ENCODE measurements at regions of chr7 and their contacts with region 1.

Region 1: GRCh38 chr7:98400542-98401340 is at the start of gene BAIAP2L1:
- DNase-seq: peak; percentile 82
- ATAC-seq: peak; percentile 91 to 98 (median 96)
- H3K4me3 ChIP-seq: peak within 1 kb of the TSS; percentile 33 to 85 (median 63)
- H3K27ac ChIP-seq: peak within 1 kb of the TSS; percentile 66 to 88 (median 74)
- H3K4me1 ChIP-seq: peaks cover 0 to 13% (median 7%) of the 10 kb centered on the region in 9 donors
- H3K27me3 ChIP-seq: peaks cover 0 to 46% (median 23%) of the 10 kb centered on the region in 7 donors
- CTCF ChIP-seq: peak in 4 of 9 donors; percentile 64 to 78 (median 72)
- total RNA-seq, gene BAIAP2L1: 0.53 to 5.2 (median 1.4) TPM

Region 2: DNA sequence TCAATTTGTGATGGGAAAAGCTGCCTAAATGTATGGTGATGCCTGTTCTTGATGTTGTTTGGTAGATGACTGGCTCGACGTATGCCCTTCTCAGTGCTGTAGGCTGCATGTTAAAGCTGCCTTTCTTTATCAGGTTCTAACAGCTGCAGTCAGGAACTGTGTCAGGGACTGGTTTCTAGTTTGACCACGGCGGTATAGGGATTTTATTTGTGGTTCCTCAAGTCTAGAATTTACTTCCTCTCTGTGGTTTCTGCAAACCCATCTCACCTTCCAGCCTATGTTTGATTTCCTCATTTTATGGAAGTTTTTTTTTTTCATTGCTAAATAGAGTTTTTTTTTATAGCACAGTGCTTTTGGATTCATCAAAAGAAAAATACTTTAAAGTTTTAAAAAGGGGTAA is 267.6 kb before region 1 on chr7:
- intact Hi-C with region 1: no loop called
- DNase-seq: no peak
- ATAC-seq: peak in 3 of 8 donors; percentile 19 to 44 (median 22)
- H3K4me3 ChIP-seq: no peak overlapping the region
- H3K27ac ChIP-seq: peak overlapping the region in 1 of 10 donors; percentile 77
- H3K4me1 ChIP-seq: peaks cover 4 to 72% (median 35%) of the 10 kb centered on the region in 9 donors
- H3K27me3 ChIP-seq: peaks cover 0 to 35% (median 0%) of the 10 kb centered on the region in 7 donors
- CTCF ChIP-seq: no peak

Region 3: GRCh38 chr7:98251841-98252639 is 148.7 kb before region 1 on chr7 and contains the start of gene TECPR1:
- intact Hi-C with region 1: loop called in 2 of 10 experiments (anchors 2 to 5 kb)
- DNase-seq: peak; percentile 95 to 96
- ATAC-seq: peak; percentile 98 to 100 (median 99)
- H3K4me3 ChIP-seq: peak within 1 kb of the TSS; percentile 75 to 97 (median 90)
- H3K27ac ChIP-seq: peak within 1 kb of the TSS; percentile 72 to 93 (median 88)
- H3K4me1 ChIP-seq: peaks cover 4 to 66% (median 52%) of the 10 kb centered on the region in 9 donors
- H3K27me3 ChIP-seq: no peaks in the 10 kb centered on the region
- CTCF ChIP-seq: no peak
- total RNA-seq, gene TECPR1: 12.8 to 23.8 (median 15.4) TPM

Region 4: DNA sequence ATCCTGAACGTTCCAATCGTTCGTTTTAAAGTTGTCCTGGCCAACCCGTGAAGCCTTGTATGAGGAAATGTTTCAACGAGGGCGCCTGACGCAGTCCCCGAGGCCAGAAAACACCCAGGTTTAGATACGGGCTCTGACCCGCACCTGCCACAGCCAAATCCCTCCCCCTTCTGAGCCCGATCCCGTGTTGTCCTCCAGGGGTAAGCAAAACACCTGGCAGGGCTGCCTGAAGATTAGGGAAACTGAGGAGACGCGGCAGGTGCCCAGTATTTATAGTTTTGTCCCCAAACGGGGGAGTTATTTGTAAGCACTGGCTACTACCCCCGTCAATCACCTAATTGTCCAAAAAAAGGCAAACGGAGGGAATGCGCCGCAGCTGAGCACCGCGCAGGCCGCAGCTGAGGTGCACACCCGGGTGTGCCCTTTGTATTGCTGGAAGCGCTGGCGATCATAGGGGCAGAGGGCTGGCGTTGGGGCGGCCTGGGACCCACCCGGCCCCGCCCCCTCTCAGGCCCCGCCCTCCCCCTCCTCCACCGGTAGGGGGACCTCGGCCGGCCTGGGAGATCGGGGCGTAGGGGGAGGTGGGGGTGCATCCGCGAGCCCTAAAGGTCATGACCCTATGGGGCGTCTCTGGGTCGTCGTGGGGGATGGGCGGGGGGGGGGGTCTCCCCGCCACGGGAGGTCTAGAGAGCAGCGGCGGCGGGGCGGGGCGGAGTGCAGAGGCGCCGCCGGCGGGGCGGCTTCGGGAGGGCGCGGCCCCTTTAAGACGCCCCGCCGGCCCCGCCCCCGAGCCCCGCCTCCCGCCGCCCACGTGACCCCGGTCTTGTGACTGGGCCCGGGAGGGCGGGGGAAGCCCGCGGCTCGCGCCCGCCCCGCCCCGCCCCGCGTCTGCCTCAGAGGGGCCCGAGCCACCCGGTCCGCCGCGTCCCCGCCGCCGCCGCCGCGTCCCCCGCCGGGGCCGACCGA is 119.7 kb before region 1 on chr7 and contains the start of gene BRI3:
- intact Hi-C with region 1: loop called in 1 of 10 experiments (anchors 5 kb)
- DNase-seq: peak; percentile 91 to 95
- ATAC-seq: peak; percentile 70 to 89 (median 78)
- H3K4me3 ChIP-seq: peak within 1 kb of the TSS; percentile 82 to 99 (median 93)
- H3K27ac ChIP-seq: peak within 1 kb of the TSS; percentile 84 to 99 (median 97)
- H3K4me1 ChIP-seq: peaks cover 26 to 55% (median 46%) of the 10 kb centered on the region in 9 donors
- H3K27me3 ChIP-seq: no peaks in the 10 kb centered on the region
- CTCF ChIP-seq: peak in 6 of 9 donors; percentile 6 to 62 (median 52)
- total RNA-seq, gene BRI3: 174 to 267 (median 218) TPM

Region 5: DNA sequence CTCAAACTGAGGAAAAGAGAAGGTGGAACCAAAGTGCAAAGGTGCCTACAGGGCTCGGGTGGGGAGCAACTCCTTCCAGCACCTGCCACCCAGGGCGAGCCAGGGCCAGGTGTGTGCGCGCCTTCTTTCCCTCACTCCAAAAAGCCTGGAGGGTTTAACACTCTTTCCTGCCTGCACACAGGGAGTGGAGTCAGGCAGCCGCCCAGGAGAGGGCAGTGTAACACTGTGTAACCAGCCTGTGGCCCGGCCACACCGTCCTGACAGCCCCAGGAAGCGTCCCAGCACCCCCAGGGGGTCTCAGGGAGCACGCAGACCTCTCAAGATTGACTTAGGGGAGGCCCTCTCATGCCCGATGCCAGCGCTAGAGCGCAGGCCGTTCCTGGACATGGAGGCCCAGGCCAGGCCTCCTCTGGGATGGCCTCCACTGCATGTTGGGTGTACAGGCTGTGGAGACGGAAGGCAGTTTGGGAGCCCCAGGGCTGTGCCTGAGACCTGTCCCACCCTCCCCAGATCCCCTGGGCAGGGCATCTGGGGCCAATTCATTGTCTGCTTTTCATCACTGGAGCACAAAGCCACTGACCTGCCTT is 105.9 kb before region 1 on chr7:
- intact Hi-C with region 1: loop called in 9 of 10 experiments (anchors 2 to 10 kb)
- DNase-seq: peak; percentile 41 to 48
- ATAC-seq: peak; percentile 55 to 82 (median 73)
- H3K4me3 ChIP-seq: no peak overlapping the region
- H3K27ac ChIP-seq: peak overlapping the region in 1 of 10 donors; percentile 7
- H3K4me1 ChIP-seq: peaks cover 0 to 26% (median 14%) of the 10 kb centered on the region in 9 donors
- H3K27me3 ChIP-seq: no peaks in the 10 kb centered on the region
- CTCF ChIP-seq: peak; percentile 45 to 72 (median 64)

Region 6: GRCh38 chr7:98329100-98329790 is 71.5 kb before region 1 on chr7:
- intact Hi-C with region 1: loop called in 2 of 10 experiments (anchors 1 to 10 kb)
- DNase-seq: peak; percentile 29 to 61
- ATAC-seq: peak; percentile 83 to 96 (median 91)
- H3K4me3 ChIP-seq: peak overlapping the region in 3 of 10 donors; percentile 3 to 12 (median 6)
- H3K27ac ChIP-seq: peak overlapping the region; percentile 50 to 88 (median 76)
- H3K4me1 ChIP-seq: peaks cover 2 to 20% (median 10%) of the 10 kb centered on the region in 9 donors
- H3K27me3 ChIP-seq: no peaks in the 10 kb centered on the region
- CTCF ChIP-seq: no peak

Region 7: GRCh38 chr7:98365863-98366561 is 34.7 kb before region 1 on chr7:
- intact Hi-C with region 1: loop called in 2 of 10 experiments (anchors 1 to 2 kb)
- DNase-seq: peak; percentile 33 to 80
- ATAC-seq: peak; percentile 90 to 98 (median 96)
- H3K4me3 ChIP-seq: no peak overlapping the region
- H3K27ac ChIP-seq: peak overlapping the region; percentile 45 to 88 (median 69)
- H3K4me1 ChIP-seq: peaks cover 0 to 34% (median 8%) of the 10 kb centered on the region in 9 donors
- H3K27me3 ChIP-seq: no peaks in the 10 kb centered on the region
- CTCF ChIP-seq: no peak

Region 8: GRCh38 chr7:98459529-98459928 is 58.8 kb after region 1 on chr7:
- intact Hi-C with region 1: no loop called
- DNase-seq: no peak
- ATAC-seq: no peak
- H3K4me3 ChIP-seq: no peak overlapping the region
- H3K27ac ChIP-seq: no peak overlapping the region
- H3K4me1 ChIP-seq: no peaks in the 10 kb centered on the region
- H3K27me3 ChIP-seq: peaks cover 0 to 35% (median 0%) of the 10 kb centered on the region in 7 donors
- CTCF ChIP-seq: no peak

Measured in heart right ventricle (tissue), 16 donors.